Activated CD4-positive, alpha-beta memory T cell treated with anti-CD3 and anti-CD28 coated beads for 36 hours (primary cell): ENCODE measurements at regions of chr19 and their contacts with region 1.

Region 1: GRCh38 chr19:41785653-41786052 is 10.7 kb upstream of the CEACAM3 start:
- DNase-seq: peak; percentile 83
- H3K4me3 Mint-ChIP-seq: peak overlapping the region; percentile 0
- H3K27ac Mint-ChIP-seq: no peak overlapping the region
- H3K4me1 Mint-ChIP-seq: peaks cover 16% of the 10 kb centered on the region
- H3K27me3 Mint-ChIP-seq: peaks cover 47% of the 10 kb centered on the region

Region 2: GRCh38 chr19:41775360-41775695 is 10.3 kb before region 1 on chr19:
- CTCF ChIA-PET with region 1: interaction called, 39 read pairs
- POLR2A ChIA-PET with region 1: no interaction called
- intact Hi-C with region 1: no loop called
- DNase-seq: no peak
- H3K4me3 Mint-ChIP-seq: no peak overlapping the region
- H3K27ac Mint-ChIP-seq: no peak overlapping the region
- H3K4me1 Mint-ChIP-seq: peaks cover 34% of the 10 kb centered on the region
- H3K27me3 Mint-ChIP-seq: peaks cover 65% of the 10 kb centered on the region

Region 3: DNA sequence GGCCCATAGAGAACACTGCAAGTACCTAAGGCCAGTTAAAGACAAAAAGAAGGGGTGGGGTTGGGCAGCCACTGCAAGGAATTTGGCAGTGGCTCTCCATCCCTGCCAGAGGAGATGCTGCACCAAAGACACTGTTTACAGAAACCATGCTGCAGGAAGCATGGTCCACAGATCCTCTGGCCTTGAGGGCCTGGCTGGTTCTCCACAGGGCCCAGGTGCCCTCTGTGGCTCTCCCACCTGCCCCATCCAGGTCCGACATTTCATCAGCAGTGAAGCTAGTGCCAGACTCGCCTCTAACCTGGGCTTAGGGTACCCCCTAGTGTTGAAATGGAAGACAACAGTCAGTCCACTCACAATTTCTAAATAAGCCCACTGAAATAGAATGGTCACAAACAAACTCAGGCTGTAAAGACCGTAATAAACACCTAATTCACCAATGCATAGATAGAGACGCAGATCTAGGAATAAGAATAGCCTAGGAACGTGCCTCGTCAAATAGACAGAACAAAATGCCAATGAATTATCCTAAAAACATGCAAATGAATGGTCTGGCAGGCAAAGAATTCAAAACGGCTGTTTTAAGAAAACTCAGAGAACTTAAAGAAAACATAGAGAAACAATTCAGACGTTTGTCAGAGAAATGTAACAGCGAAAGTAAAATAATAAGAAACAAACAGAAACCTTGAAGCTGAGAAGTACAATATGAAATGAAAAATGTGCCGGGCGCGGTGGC is 35.5 kb after region 1 on chr19:
- CTCF ChIA-PET with region 1: interaction called, 107 read pairs
- POLR2A ChIA-PET with region 1: no interaction called
- intact Hi-C with region 1: no loop called
- DNase-seq: peak; percentile 53
- H3K4me3 Mint-ChIP-seq: no peak overlapping the region
- H3K27ac Mint-ChIP-seq: no peak overlapping the region
- H3K4me1 Mint-ChIP-seq: no peaks in the 10 kb centered on the region
- H3K27me3 Mint-ChIP-seq: peaks cover 15% of the 10 kb centered on the region